ENCODE measurements at regions of chrX and their contacts with region 1.

Region 1: DNA sequence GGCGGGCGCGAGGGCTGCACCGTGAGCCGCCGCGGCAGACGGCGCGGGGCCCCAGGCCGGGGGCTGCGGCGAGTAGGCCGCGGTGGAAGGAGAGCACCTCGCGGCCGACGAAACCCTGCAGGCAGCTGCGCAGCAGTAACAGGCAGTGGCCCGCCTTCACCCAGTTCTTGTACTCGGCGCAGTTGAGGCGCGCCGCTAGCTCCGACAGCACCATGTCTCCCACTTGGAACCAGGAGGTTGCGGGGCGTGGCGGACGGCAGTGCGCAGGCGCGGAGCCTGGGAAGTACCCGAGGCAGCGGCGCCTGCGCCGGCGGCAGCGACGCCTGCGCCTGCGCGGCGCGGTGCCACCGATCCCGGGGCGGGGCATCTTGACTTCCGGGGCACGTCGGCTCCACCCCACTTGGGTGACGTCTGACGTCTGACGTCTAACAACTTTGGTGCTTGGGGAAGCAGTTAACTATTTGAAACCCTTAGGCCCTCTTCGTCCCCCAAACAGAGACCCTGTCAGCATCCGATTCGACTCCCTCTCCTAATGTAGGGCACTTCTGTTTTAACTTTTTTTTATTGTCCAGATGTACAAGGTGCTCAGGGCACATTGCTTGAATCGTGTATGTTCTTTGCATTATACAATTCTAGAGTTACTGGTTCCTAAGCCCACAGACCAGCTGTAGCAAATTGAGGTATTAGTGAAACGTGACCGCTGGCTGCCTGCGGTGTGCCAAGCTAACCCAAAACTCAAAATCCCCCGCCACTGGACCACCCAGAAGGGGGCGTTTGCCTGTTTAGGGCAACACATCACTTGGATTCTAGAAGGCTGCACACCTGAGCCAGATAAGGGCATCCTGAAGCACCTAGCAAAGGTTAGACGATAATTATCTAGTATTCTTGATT is at the start of gene CXorf38:
- DNase-seq: peak; percentile 83
- ATAC-seq: peak; percentile 74
- H3K4me3 ChIP-seq: peak within 1 kb of the TSS; percentile 92
- H3K27ac ChIP-seq: peak within 1 kb of the TSS; percentile 74
- H3K4me1 ChIP-seq: no peaks in the 10 kb centered on the region
- H3K27me3 ChIP-seq: no peaks in the 10 kb centered on the region
- CTCF ChIP-seq: no peak
- POLR2A ChIP-seq: 0 out of 2 replicates have a peak, but pooled peaks have one; percentile 22
- RAD21 ChIP-seq: no peak
- total RNA-seq, gene CXorf38: 9.9 and 10.0 TPM in 2 replicates

Region 2: DNA sequence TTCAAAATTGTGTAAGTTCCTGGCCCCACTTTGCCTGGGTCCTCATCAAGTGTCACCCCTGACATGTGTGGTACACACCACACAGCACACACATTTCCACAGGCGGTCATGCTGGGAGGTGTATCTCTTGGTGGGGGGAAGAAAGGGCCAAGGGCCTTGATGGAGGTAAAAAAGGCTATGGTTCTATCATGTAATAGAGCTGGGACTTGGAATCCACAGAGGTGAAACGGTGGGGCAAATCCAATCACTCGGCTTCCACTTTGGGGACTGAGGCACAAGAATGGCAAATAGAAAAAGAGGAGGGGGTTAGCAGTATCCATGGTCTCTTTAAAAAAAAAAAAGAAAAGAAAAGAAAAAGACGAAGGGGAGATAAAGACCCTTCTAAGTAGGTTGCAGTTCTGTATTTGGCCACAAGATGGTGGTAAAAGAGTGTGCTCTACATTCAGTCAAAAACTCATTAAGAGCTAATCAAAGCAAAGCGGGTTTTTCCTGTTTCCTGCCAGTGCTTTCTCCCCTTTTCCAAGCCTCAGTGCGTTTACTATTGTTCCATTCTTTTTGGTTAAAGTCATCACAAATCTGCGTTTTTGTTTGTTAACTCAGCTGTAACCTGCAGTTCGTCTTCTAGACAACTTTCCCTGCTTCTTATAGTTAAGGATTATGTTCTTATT is 103.8 kb before region 1 on chrX:
- CTCF ChIA-PET with region 1: interaction called, 3 read pairs
- POLR2A ChIA-PET with region 1: no interaction called
- dilution Hi-C with region 1: no loop called
- in situ Hi-C with region 1: no loop called
- intact Hi-C with region 1: loop called (anchors 1 kb)
- DNase-seq: peak; percentile 71
- ATAC-seq: peak; percentile 69
- H3K4me3 ChIP-seq: no peak overlapping the region
- H3K27ac ChIP-seq: no peak overlapping the region; the same call in 1 of the 2 replicates
- H3K4me1 ChIP-seq: peaks cover 7% of the 10 kb centered on the region; the same call in 1 of the 2 replicates
- H3K27me3 ChIP-seq: peaks cover 8% of the 10 kb centered on the region; the same call in 1 of the 2 replicates
- CTCF ChIP-seq: peak; percentile 72
- POLR2A ChIP-seq: no peak
- RAD21 ChIP-seq: peak; percentile 78

Region 3: GRCh38 chrX:40558590-40558989 is 89.0 kb before region 1 on chrX:
- CTCF ChIA-PET with region 1: no interaction called
- POLR2A ChIA-PET with region 1: no interaction called
- dilution Hi-C with region 1: no loop called
- in situ Hi-C with region 1: no loop called
- intact Hi-C with region 1: no loop called
- DNase-seq: no peak
- ATAC-seq: no peak
- H3K4me3 ChIP-seq: no peak overlapping the region
- H3K27ac ChIP-seq: no peak overlapping the region
- H3K4me1 ChIP-seq: no peaks in the 10 kb centered on the region
- H3K27me3 ChIP-seq: peaks cover 14% of the 10 kb centered on the region
- CTCF ChIP-seq: no peak
- POLR2A ChIP-seq: no peak
- RAD21 ChIP-seq: no peak

Region 4: DNA sequence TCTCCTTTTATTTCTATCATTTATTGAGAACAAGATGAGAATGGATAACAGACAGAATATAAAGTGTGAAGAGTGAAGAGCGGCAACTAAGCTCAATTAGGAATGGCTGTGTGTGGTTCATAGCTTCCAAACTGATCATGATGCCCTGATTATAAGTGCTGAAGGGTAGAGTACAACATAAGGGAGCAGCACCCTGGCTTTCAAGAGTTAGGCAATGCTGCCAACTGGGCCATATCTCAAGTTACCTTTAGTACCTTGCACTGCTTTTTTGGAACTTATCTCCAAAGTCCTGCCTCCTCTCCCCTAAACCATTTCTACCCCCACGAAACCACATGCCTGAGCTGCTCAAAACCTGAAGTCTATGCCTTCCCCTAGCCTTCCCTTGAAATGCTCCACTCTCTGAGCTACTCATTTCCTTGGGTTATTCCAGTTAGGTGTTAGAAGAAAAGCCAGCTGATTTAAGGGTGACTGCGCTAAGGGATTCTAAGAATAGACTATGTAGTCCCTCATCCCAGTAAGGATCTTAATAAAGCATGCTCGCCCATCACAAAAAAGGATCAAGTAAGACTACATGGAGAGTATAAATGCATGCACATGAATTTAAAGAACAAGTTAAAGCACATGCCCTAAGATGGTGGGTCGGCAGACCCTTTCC is 58.2 kb after region 1 on chrX:
- CTCF ChIA-PET with region 1: no interaction called
- POLR2A ChIA-PET with region 1: no interaction called
- dilution Hi-C with region 1: no loop called
- in situ Hi-C with region 1: no loop called
- intact Hi-C with region 1: no loop called
- DNase-seq: no peak
- ATAC-seq: no peak
- H3K4me3 ChIP-seq: no peak overlapping the region
- H3K27ac ChIP-seq: no peak overlapping the region
- H3K4me1 ChIP-seq: no peaks in the 10 kb centered on the region
- H3K27me3 ChIP-seq: peaks cover 2% of the 10 kb centered on the region
- CTCF ChIP-seq: no peak
- POLR2A ChIP-seq: no peak
- RAD21 ChIP-seq: no peak

Region 5: GRCh38 chrX:40922307-40922706 is 274.8 kb after region 1 on chrX:
- CTCF ChIA-PET with region 1: no interaction called
- POLR2A ChIA-PET with region 1: no interaction called
- dilution Hi-C with region 1: no loop called
- in situ Hi-C with region 1: no loop called
- intact Hi-C with region 1: loop called (anchors 5 kb)
- DNase-seq: peak; percentile 44
- ATAC-seq: peak; percentile 32
- H3K4me3 ChIP-seq: no peak overlapping the region
- H3K27ac ChIP-seq: no peak overlapping the region
- H3K4me1 ChIP-seq: no peaks in the 10 kb centered on the region
- H3K27me3 ChIP-seq: no peaks in the 10 kb centered on the region; the same call in 1 of the 2 replicates
- CTCF ChIP-seq: peak; percentile 39
- POLR2A ChIP-seq: no peak
- RAD21 ChIP-seq: peak; percentile 40

Region 6: DNA sequence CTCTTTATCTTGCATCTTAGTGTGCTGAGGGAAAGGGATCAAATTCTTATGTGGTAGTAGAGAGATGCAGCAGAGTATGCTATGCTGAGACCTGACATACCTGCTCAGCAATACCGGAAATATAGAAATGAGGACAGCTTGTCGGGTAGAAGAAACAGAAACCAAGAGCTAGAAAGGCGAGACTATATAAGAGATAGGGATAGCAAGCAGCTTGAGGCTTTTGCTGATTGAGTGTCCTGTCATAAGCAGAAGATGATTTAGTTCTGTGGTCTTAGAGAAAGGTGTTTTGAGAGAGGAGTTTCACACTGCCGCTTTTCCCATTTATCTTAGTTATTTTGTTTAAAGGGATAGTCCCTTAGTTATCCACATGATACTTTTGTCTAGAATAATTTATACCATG is 469.4 kb after region 1 on chrX:
- CTCF ChIA-PET with region 1: interaction called, 4 read pairs
- POLR2A ChIA-PET with region 1: no interaction called
- dilution Hi-C with region 1: no loop called
- in situ Hi-C with region 1: loop called (anchors 5 kb)
- intact Hi-C with region 1: loop called (anchors 1 kb)
- DNase-seq: no peak
- ATAC-seq: no peak
- H3K4me3 ChIP-seq: no peak overlapping the region
- H3K27ac ChIP-seq: no peak overlapping the region
- H3K4me1 ChIP-seq: no peaks in the 10 kb centered on the region; the same call in 1 of the 2 replicates
- H3K27me3 ChIP-seq: no peaks in the 10 kb centered on the region; the same call in none of the 2 replicates
- CTCF ChIP-seq: no peak
- POLR2A ChIP-seq: no peak
- RAD21 ChIP-seq: no peak

Region 7: DNA sequence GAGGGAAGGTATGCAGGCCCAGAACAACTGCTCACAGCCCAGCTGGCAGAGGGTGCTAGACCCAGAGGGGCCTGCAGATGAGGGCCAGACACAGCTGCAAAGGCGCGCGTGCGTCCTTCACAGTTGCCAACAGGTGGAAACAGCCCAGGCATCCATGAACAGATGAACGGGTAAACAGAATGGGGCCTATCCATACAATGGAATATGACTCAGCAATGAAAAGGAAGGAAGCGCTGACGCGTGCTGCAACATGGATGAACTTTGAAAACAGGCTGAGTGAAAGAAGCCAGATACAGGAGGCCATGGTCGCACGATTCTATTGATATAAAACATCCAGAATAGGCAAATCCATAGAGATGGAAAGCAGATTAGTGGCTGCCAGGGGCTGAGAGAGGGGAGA is 603.3 kb after region 1 on chrX:
- CTCF ChIA-PET with region 1: no interaction called
- POLR2A ChIA-PET with region 1: no interaction called
- dilution Hi-C with region 1: no loop called
- in situ Hi-C with region 1: loop called (anchors 25 kb)
- intact Hi-C with region 1: loop called (anchors 5 kb)
- DNase-seq: no peak
- ATAC-seq: no peak
- H3K4me3 ChIP-seq: no peak overlapping the region
- H3K27ac ChIP-seq: no peak overlapping the region
- H3K4me1 ChIP-seq: no peaks in the 10 kb centered on the region
- H3K27me3 ChIP-seq: peaks cover 4% of the 10 kb centered on the region; the same call in 1 of the 2 replicates
- CTCF ChIP-seq: no peak
- POLR2A ChIP-seq: no peak
- RAD21 ChIP-seq: no peak

Measured in IMR-90 (cell line).